ENCODE measurements at regions of chr10 and their contacts with region 1.

Region 1: GRCh38 chr10:128011175-128011979 is 104.5 kb downstream of the PTPRE start:
- DNase-seq: peak; percentile 16
- H3K4me3 ChIP-seq: no peak overlapping the region
- H3K27ac ChIP-seq: no peak overlapping the region
- H3K27me3 ChIP-seq: peaks cover 5% of the 10 kb centered on the region
- CTCF ChIP-seq: peak; percentile 93

Region 2: DNA sequence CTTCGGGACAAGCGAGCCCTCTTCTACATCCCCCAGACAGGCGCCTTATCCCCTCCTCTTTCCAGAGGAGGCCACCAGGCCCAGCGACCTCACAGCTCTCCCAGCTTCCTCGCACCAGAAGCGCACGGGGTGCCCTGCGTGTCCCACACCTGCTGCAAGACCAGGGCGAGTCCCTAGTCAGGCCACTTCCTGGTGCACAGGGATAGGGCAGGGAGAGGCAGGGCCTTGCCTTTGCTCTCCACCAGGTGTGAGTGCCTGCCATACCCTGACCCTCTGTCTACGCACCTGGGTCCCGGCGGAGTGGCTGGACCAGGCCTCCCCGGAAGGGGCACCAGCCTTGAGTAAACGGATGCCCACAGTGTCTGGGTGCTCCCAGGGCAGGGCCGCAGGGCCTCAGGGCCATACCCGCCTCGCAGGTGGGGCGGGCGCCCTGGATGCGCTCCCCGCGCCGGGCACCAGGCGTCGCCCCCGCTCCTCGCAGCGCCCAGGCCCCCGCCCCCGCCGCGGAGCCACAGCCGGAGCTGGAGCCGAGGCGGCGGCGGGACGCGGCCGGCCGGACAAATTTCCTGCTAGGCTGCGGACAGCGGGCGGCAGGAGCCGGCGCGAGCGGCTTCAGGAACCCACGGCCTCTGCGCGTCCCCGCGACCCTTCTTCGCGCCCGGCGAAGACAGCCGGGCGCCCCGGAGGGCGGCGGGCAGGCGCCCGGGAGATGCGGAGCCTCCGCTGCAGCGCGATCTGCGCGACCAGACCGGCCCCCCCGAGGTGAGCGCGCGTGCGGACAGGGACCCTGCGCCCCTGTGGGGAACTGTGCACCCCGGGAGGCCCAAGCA is 104.6 kb before region 1 on chr10 and contains the start of gene PTPRE:
- CTCF ChIA-PET with region 1: interaction called, 18 read pairs
- POLR2A ChIA-PET with region 1: no interaction called
- DNase-seq: no peak
- H3K4me3 ChIP-seq: no peak within 1 kb of the TSS
- H3K27ac ChIP-seq: no peak within 1 kb of the TSS
- H3K27me3 ChIP-seq: peaks cover 4% of the 10 kb centered on the region
- CTCF ChIP-seq: no peak; the same call in 1 of the 2 replicates
- polyA plus RNA-seq, gene PTPRE: 0.04 and 0.38 TPM in 2 replicates

Region 3: GRCh38 chr10:127999297-128000129 is 11.9 kb before region 1 on chr10:
- CTCF ChIA-PET with region 1: interaction called, 15 read pairs
- POLR2A ChIA-PET with region 1: no interaction called
- DNase-seq: no peak
- H3K4me3 ChIP-seq: no peak overlapping the region
- H3K27ac ChIP-seq: no peak overlapping the region
- H3K27me3 ChIP-seq: no peaks in the 10 kb centered on the region
- CTCF ChIP-seq: no peak

Region 4: DNA sequence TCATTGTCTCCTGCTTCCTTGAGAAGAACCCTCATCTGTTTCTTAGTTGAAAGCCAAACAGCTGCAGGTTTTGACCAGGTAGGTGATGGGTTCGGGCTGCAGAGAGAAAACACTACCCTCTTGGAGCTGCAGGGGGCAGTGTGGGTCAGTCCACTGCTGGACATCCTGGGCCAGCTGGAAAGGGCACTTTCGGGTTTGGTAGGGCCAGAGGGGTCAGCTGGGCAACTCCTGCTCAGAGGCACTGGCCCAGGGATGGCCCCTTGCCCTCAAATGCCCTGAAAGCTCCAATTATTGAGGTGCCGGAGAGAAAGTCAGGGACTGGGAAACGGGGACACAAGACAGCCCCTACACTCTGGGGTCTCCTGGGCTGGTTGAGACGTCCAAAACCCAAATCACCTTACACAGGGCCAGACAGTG is 24.2 kb after region 1 on chr10:
- CTCF ChIA-PET with region 1: interaction called, 14 read pairs
- POLR2A ChIA-PET with region 1: no interaction called
- DNase-seq: no peak
- H3K4me3 ChIP-seq: no peak overlapping the region
- H3K27ac ChIP-seq: no peak overlapping the region
- H3K27me3 ChIP-seq: no peaks in the 10 kb centered on the region
- CTCF ChIP-seq: peak; percentile 67